ENCODE measurements at regions of chr2 and their contacts with region 1.

Region 1: DNA sequence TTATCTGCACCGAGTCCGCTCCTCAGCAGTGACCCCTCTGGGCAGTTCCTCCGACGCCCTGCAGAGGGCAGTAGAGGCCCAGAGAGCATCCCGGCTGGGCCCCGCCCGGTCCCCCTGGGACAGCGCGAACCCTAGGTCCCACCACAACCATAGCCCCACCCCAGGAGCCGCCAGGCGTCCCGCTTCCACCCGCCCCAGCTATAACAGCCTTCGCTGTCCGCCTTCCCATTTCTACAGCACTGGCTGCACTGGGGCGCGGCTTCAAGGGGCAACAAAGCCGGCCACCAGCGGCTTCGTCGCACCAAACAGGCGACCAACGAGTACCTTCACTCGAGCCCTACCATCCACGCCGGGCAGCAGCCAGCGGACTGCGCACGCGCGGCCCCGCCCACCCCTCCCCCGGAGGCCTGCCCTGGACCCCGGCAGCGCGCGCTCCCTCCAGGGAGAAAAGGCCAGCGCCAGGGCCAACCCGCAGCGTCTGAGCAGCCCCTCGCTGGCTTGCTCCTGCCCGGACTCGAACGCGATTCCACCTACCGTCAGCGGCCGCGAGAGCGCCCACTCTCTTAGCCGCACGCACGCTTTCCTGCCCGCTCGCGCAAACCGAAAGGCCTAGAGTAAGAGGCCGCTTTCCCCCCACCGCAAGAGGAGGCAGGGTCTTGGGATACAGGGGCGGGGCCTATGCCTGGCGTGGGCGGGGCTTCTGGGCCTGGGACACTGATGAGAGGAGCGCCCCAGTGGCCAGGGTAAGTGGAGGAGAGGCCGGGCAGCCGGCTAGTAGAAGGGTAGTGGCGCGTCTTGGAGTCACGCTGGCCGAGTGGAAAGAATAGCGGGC is at the start of gene NHEJ1:
- DNase-seq: peak; percentile 95
- H3K4me3 Mint-ChIP-seq: peak within 1 kb of the TSS; percentile 90
- H3K27ac Mint-ChIP-seq: peak within 1 kb of the TSS; percentile 97
- H3K4me1 Mint-ChIP-seq: peaks cover 27% of the 10 kb centered on the region
- H3K27me3 Mint-ChIP-seq: no peaks in the 10 kb centered on the region

Region 2: DNA sequence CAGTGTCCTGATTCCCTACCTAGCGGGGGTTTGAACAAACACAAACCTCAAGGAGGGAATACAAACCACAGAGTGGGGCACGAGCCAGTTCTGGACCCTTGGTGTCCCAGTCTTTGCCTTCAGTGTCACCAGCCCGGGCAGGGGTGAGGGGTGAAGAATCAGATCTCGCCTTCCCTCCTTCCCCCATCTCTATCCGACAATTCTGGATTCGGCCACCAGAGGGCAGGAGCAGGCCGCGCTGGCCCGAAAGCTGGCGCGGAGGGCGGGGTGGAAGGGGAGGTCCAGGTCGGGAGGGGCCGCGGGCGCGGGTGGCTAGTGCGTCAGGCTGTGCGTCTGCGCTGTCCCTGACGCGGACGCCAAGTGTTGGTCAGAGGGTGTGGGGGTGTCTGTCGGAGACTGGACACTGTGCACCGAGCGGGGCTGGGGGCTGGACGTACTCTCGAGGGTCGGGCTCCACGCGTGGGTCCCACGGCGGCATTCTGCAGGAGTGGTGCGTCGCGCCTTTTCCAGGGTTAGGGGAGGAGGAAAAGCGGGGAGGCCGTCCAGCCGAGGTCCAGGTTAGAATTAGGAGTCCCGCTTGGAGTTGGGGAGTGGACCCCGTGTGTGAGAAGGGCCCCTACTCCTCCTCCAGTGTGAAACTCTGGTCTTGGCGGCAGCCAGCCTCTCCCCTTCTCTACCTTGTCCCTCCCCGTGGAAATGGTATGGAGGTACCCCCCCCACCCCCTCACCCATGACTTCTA is 164.3 kb before region 1 on chr2:
- CTCF ChIA-PET with region 1: interaction called, 28 read pairs
- DNase-seq: peak; percentile 83
- H3K4me3 Mint-ChIP-seq: no peak overlapping the region
- H3K27ac Mint-ChIP-seq: no peak overlapping the region
- H3K4me1 Mint-ChIP-seq: peaks cover 10% of the 10 kb centered on the region
- H3K27me3 Mint-ChIP-seq: peaks cover 100% of the 10 kb centered on the region

Region 3: GRCh38 chr2:219057709-219058540 is 102.5 kb before region 1 on chr2:
- CTCF ChIA-PET with region 1: interaction called, 47 read pairs
- DNase-seq: peak; percentile 81
- H3K4me3 Mint-ChIP-seq: no peak overlapping the region
- H3K27ac Mint-ChIP-seq: peak overlapping the region; percentile 24
- H3K4me1 Mint-ChIP-seq: peaks cover 22% of the 10 kb centered on the region
- H3K27me3 Mint-ChIP-seq: peaks cover 98% of the 10 kb centered on the region

Region 4: DNA sequence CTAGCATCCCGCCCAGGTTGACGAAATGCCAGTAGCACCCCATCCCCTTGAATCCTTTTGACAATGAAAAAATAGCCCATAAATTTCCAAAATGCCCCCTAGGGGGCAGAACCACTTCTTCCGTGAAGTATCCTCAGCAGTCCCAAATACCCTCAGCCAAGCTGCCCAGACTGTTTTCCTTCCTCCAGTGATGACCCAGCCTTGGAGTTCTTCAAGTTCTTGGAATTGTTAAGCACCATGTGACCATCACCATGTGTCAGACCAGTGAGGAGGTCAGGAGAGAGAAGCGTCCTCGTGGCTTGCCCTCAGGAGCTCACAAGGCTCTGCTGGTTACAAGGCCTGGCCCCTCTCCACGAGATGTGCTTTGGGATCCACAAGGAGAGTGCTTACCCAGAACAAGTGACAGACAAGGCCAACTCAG is 10.8 kb after region 1 on chr2:
- CTCF ChIA-PET with region 1: interaction called, 18 read pairs
- DNase-seq: peak; percentile 36
- H3K4me3 Mint-ChIP-seq: no peak overlapping the region
- H3K27ac Mint-ChIP-seq: peak overlapping the region; percentile 77
- H3K4me1 Mint-ChIP-seq: peaks cover 30% of the 10 kb centered on the region
- H3K27me3 Mint-ChIP-seq: no peaks in the 10 kb centered on the region

Region 5: GRCh38 chr2:219176818-219177551 is 16.6 kb after region 1 on chr2 and contains the start of gene CNPPD1:
- CTCF ChIA-PET with region 1: interaction called, 18 read pairs
- DNase-seq: peak; percentile 92
- H3K4me3 Mint-ChIP-seq: peak within 1 kb of the TSS; percentile 81
- H3K27ac Mint-ChIP-seq: peak within 1 kb of the TSS; percentile 100
- H3K4me1 Mint-ChIP-seq: peaks cover 60% of the 10 kb centered on the region
- H3K27me3 Mint-ChIP-seq: no peaks in the 10 kb centered on the region

Region 6: DNA sequence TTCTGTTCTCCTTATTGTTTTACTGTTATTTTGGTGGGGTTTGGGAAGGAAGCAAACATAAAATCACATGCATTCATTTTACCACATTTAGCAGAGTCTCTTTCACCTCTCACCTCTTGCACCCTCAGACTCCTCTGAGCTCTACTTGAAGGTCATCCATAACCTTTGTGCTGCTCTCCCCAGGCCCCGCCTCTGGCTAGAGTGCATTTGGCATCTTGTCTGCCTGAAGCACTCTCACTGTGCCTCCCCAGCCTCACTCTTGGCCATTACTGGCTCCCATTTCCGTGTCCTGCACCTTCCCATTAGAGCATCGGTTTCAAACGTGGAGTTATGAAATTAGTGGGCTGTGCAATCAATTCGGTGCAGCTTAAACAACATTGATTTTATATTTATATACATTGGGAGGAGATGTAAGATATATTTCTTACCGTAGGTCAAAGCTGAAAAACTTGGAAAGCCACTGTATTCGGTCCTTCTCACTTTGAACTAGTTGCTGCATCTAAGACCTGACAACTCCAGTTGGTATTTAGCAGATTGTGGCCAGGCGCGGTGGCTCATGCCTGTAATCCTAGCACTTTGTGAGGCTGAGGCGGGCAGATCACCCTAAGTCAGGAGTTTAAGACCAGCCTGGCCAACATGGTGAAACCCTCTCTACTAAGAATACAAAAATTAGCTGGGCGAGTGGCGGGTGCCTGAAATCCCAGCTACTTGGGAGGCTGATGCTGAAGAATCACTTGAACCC is 39.2 kb after region 1 on chr2:
- CTCF ChIA-PET with region 1: interaction called, 10 read pairs
- DNase-seq: no peak
- H3K4me3 Mint-ChIP-seq: no peak overlapping the region
- H3K27ac Mint-ChIP-seq: no peak overlapping the region
- H3K4me1 Mint-ChIP-seq: peaks cover 8% of the 10 kb centered on the region
- H3K27me3 Mint-ChIP-seq: peaks cover 33% of the 10 kb centered on the region

Region 7: DNA sequence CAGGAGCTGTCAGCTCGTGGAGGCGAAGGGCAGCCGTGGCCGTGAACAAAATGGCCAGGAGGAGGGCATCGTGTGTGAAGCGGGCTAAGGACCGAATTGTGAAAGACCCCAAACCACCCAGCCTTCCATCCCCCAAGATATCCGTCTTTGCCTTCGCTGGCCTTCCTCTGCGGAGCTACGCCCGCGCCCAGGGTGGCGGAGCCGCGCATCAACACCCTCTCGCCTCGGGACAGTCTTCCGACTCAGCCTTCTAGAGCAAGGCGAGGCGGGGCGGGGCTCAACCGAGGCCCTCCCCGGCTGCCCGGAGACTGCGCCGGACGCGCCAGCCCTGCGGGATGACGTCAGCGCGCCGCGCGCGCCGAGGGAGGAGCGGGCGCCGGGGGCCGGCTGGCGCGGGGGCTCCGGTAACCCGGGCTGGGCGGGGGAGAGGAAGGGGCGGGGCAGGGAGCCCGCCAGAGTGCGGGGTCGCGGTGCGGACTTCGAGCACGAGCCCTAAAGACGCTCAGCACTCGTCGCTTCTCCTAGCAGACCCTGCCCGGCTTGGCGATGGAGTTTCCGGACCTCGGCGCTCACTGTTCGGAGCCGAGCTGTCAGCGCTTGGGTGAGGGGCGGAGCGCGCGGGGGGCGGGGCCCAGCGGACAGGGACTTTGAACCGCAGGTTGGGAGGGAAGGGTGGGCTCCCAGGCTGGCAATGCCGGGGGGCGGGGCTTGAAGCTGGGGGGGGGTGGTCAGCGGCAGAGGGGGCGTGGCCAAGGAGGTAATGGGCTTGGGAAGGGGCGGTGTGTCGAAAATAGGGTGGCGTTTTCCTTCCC is 46.2 kb after region 1 on chr2 and contains the start of gene ZFAND2B:
- CTCF ChIA-PET with region 1: interaction called, 28 read pairs
- DNase-seq: peak; percentile 95
- H3K4me3 Mint-ChIP-seq: peak within 1 kb of the TSS; percentile 87
- H3K27ac Mint-ChIP-seq: peak within 1 kb of the TSS; percentile 98
- H3K4me1 Mint-ChIP-seq: peaks cover 58% of the 10 kb centered on the region
- H3K27me3 Mint-ChIP-seq: no peaks in the 10 kb centered on the region

Region 8: GRCh38 chr2:219398721-219399333 is 238.4 kb after region 1 on chr2:
- CTCF ChIA-PET with region 1: no interaction called
- DNase-seq: no peak
- H3K4me3 Mint-ChIP-seq: no peak overlapping the region
- H3K27ac Mint-ChIP-seq: no peak overlapping the region
- H3K4me1 Mint-ChIP-seq: peaks cover 8% of the 10 kb centered on the region
- H3K27me3 Mint-ChIP-seq: peaks cover 19% of the 10 kb centered on the region